Naive thymus-derived CD4-positive, alpha-beta T cell (primary cell): ENCODE measurements at regions of chr16 and their contacts with region 1.

Region 1: GRCh38 chr16:79601931-79602627 is 1.5 kb upstream of the MAF start:
- DNase-seq: peak; percentile 51 to 78 (median 72)
- ATAC-seq: peak; percentile 20
- H3K4me3 ChIP-seq: peak overlapping the region; percentile 84
- H3K4me3 Mint-ChIP-seq: peak overlapping the region; percentile 90 to 98 (median 94)
- H3K27ac ChIP-seq: no peak overlapping the region
- H3K27ac Mint-ChIP-seq: peak overlapping the region in 7 of 9 donors; percentile 3 to 98 (median 66)
- H3K4me1 ChIP-seq: peaks cover 4 to 7% of the 10 kb centered on the region in 2 donors
- H3K4me1 Mint-ChIP-seq: peaks cover 6 to 47% (median 33%) of the 10 kb centered on the region in 7 donors
- H3K27me3 ChIP-seq: no peaks in the 10 kb centered on the region
- H3K27me3 Mint-ChIP-seq: peaks cover 15 to 24% (median 20%) of the 10 kb centered on the region in 5 donors

Region 2: GRCh38 chr16:78478267-78478861 is 1123.7 kb before region 1 on chr16:
- CTCF ChIA-PET with region 1: interaction called, 3 read pairs
- POLR2A ChIA-PET with region 1: no interaction called
- intact Hi-C with region 1: loop called in 1 of 2 experiments (anchors 1 kb)
- DNase-seq: peak in 3 of 9 donors; percentile 5 to 8 (median 7)
- ATAC-seq: peak; percentile 54
- H3K4me3 ChIP-seq: no peak overlapping the region
- H3K4me3 Mint-ChIP-seq: no peak overlapping the region
- H3K27ac ChIP-seq: no peak overlapping the region
- H3K27ac Mint-ChIP-seq: no peak overlapping the region
- H3K4me1 ChIP-seq: no peaks in the 10 kb centered on the region
- H3K4me1 Mint-ChIP-seq: no peaks in the 10 kb centered on the region
- H3K27me3 ChIP-seq: no peaks in the 10 kb centered on the region
- H3K27me3 Mint-ChIP-seq: no peaks in the 10 kb centered on the region

Region 3: DNA sequence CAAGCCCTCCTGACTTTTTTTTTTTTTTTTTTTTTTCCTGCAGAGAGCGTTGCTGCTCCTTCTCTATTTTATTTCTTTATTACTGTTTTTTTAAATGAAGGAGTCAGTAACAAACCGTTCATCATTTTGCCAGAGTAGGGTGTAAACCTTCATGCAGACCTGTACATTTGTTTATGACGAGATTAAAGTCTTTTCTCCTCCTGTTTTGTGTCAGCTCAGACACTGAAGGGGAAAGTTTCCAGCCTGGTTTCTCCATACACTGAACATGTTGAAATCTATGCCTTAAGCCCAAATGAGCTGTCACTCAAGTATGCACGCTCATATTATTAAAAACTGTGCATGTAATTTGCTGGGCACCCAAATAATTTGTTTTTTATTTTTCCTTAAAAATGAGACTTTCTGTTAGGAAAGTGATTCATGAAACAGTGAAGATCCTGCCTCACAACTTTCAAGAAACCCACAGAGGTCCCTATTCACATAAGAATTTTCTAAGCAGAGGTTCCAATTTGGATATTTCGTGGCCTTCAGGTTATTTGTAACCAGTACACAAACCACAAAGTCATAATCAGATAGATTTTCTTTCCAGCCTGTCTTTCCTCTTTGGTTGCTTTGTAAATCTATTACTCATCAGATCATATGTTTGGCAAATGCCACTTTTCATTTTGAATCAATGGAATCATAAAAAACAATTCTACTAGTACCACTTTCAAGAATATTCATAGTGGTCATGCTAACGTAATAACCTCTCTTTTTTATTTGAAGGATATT is 701.9 kb before region 1 on chr16:
- CTCF ChIA-PET with region 1: no interaction called
- POLR2A ChIA-PET with region 1: no interaction called
- intact Hi-C with region 1: loop called in 1 of 2 experiments (anchors 10 kb)
- DNase-seq: no peak
- ATAC-seq: no peak
- H3K4me3 ChIP-seq: no peak overlapping the region
- H3K4me3 Mint-ChIP-seq: no peak overlapping the region
- H3K27ac ChIP-seq: no peak overlapping the region
- H3K27ac Mint-ChIP-seq: peak overlapping the region in 1 of 9 donors; percentile 13
- H3K4me1 ChIP-seq: peaks cover 0 to 10% of the 10 kb centered on the region in 2 donors
- H3K4me1 Mint-ChIP-seq: peaks cover 0 to 28% (median 5%) of the 10 kb centered on the region in 7 donors
- H3K27me3 ChIP-seq: no peaks in the 10 kb centered on the region
- H3K27me3 Mint-ChIP-seq: no peaks in the 10 kb centered on the region

Region 4: DNA sequence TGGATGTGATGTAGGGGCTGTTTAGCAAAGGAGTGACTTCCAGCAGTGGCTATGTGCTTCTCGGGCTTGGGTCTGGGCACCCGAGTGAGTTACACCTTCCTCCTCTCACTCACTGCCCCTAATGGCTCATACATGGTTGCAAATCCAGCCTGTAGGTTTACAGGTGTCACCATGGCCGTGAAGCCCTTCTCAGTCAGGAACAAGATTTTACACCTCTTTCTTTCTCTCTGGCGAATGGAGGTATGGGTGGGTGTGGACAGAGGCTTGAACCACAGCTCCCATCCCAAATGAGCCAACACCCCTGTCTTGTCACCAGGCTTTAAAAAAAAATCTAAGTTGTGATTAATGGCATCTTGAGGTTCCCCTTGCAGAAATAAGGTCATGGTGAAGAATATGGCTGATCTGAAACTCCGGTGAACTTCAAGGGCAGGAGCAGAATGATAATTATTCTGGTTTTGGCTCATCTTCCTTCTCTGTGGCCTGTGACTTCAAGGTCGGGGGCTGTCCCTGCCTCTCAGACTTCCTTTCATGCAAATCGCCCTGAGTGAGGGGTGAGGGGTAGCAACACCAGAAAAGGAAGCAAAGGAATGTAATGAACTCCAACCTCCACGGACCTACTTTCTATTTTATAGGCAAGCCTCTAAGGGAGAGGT is 332.7 kb before region 1 on chr16:
- CTCF ChIA-PET with region 1: interaction called, 3 read pairs
- POLR2A ChIA-PET with region 1: no interaction called
- intact Hi-C with region 1: loop called (anchors 1 to 5 kb)
- DNase-seq: peak in 1 of 9 donors; percentile 66
- ATAC-seq: peak; percentile 12
- H3K4me3 ChIP-seq: peak overlapping the region; percentile 10
- H3K4me3 Mint-ChIP-seq: peak overlapping the region in 9 of 10 donors; percentile 23 to 79 (median 58)
- H3K27ac ChIP-seq: no peak overlapping the region
- H3K27ac Mint-ChIP-seq: peak overlapping the region in 2 of 9 donors; percentile 22 to 84
- H3K4me1 ChIP-seq: peaks cover 38 to 46% of the 10 kb centered on the region in 2 donors
- H3K4me1 Mint-ChIP-seq: peaks cover 41 to 78% (median 60%) of the 10 kb centered on the region in 7 donors
- H3K27me3 ChIP-seq: no peaks in the 10 kb centered on the region
- H3K27me3 Mint-ChIP-seq: peaks cover 15 to 43% (median 37%) of the 10 kb centered on the region in 5 donors

Region 5: DNA sequence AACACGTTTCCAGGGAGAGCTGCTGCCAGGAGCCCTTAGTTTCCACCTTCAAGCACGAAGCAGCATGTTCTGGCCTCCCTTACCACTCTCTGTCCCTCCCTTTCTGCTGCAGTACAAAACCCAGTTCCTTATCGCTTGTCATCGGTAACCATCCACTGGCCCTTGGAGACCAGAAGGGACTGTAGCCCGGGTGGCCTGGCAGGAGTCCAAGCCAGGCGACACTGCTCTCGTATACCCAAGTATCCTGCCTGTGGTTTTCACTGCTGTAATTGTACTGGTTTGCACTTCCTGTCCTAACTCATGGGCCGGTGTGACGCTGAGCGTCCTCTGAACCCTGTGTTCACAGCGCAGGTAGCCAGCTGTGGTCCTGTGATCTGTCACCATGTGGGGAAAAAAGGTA is 82.6 kb before region 1 on chr16:
- CTCF ChIA-PET with region 1: no interaction called
- POLR2A ChIA-PET with region 1: no interaction called
- intact Hi-C with region 1: no loop called
- DNase-seq: no peak
- ATAC-seq: peak; percentile 72
- H3K4me3 ChIP-seq: no peak overlapping the region
- H3K4me3 Mint-ChIP-seq: no peak overlapping the region
- H3K27ac ChIP-seq: no peak overlapping the region
- H3K27ac Mint-ChIP-seq: peak overlapping the region in 1 of 9 donors; percentile 32
- H3K4me1 ChIP-seq: peaks cover 0 to 3% of the 10 kb centered on the region in 2 donors
- H3K4me1 Mint-ChIP-seq: peaks cover 0 to 9% (median 7%) of the 10 kb centered on the region in 7 donors
- H3K27me3 ChIP-seq: no peaks in the 10 kb centered on the region
- H3K27me3 Mint-ChIP-seq: peaks cover 17 to 43% (median 32%) of the 10 kb centered on the region in 5 donors

Region 6: GRCh38 chr16:79535130-79535529 is 66.9 kb before region 1 on chr16:
- CTCF ChIA-PET with region 1: no interaction called
- POLR2A ChIA-PET with region 1: no interaction called
- intact Hi-C with region 1: no loop called
- DNase-seq: no peak
- ATAC-seq: peak; percentile 46
- H3K4me3 ChIP-seq: no peak overlapping the region
- H3K4me3 Mint-ChIP-seq: no peak overlapping the region
- H3K27ac ChIP-seq: no peak overlapping the region
- H3K27ac Mint-ChIP-seq: no peak overlapping the region
- H3K4me1 ChIP-seq: no peaks in the 10 kb centered on the region
- H3K4me1 Mint-ChIP-seq: peaks cover 0 to 3% (median 0%) of the 10 kb centered on the region in 7 donors
- H3K27me3 ChIP-seq: no peaks in the 10 kb centered on the region
- H3K27me3 Mint-ChIP-seq: peaks cover 0 to 4% (median 0%) of the 10 kb centered on the region in 5 donors

Region 7: DNA sequence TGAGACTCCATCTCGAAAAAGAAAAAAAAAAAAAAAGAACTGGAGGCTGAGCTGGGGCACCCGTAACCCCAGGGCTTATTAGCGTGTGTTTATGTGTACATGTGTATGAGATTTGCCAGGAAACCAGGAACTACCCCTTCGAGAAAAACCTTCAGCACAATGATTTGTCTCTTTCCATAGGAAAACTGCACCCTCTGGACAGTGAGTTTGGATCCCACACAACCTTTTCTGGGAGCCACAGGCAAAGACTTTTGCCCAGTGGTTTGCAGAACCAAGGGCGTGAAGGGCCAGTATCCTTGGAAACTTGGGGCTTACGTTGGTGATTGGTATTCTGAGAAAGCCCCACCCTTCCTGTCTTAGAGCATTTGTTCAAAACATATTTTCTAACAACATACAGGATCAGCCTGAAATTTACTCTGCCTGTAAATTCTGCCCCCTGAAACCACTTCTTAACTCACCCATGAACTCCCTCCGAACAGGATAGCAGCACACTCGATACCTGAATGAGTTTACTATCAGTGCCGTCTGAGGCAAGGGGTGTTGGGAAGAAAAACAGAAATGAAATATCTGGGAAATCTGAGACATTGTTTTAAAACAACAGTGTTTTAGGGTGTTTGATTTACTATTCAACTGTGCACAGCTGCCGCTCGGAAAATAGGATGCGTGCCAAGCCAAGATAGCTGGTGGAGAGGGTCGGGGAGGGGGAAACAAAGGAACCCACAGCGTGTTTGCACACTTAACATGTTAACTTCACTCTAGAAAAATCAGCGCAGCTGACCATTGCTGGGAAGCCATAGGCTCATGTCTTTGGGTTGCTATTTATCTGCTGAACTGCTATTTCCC is 38.7 kb after region 1 on chr16:
- CTCF ChIA-PET with region 1: no interaction called
- POLR2A ChIA-PET with region 1: interaction called, 6 read pairs
- intact Hi-C with region 1: loop called in 1 of 2 experiments (anchors 1 kb)
- DNase-seq: peak in 4 of 9 donors; percentile 1 to 35 (median 28)
- ATAC-seq: peak; percentile 34
- H3K4me3 ChIP-seq: no peak overlapping the region
- H3K4me3 Mint-ChIP-seq: peak overlapping the region; percentile 8 to 77 (median 60)
- H3K27ac ChIP-seq: no peak overlapping the region
- H3K27ac Mint-ChIP-seq: peak overlapping the region; percentile 7 to 95 (median 57)
- H3K4me1 ChIP-seq: peaks cover 3 to 5% of the 10 kb centered on the region in 2 donors
- H3K4me1 Mint-ChIP-seq: peaks cover 9 to 45% (median 28%) of the 10 kb centered on the region in 7 donors
- H3K27me3 ChIP-seq: no peaks in the 10 kb centered on the region
- H3K27me3 Mint-ChIP-seq: peaks cover 0 to 7% (median 3%) of the 10 kb centered on the region in 5 donors

Region 8: DNA sequence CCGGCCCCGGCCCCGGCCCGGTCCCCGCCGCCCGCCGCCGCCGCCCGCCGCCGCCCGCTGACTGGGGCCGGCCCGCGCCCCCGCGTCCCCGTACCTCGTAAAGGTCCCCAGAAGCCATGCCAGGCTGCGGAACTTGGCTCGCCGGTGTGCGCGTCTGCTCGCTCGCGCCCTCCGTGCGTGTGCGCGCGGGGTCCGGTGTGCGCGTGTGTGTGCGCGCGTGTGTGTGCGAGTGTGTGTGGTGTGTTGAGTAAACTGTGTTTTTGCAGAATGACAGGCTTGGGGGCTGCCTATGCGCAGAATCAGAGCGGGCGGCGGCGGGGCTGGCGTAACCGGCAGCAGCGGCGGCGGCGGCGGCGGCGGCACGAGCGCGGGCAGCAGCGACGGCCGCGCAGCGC is 1202.0 kb after region 1 on chr16:
- CTCF ChIA-PET with region 1: no interaction called
- POLR2A ChIA-PET with region 1: no interaction called
- intact Hi-C with region 1: loop called (anchors 10 kb)
- DNase-seq: peak; percentile 26 to 69 (median 52)
- ATAC-seq: peak; percentile 69
- H3K4me3 ChIP-seq: no peak overlapping the region
- H3K4me3 Mint-ChIP-seq: peak overlapping the region; percentile 85 to 96 (median 94)
- H3K27ac ChIP-seq: no peak overlapping the region
- H3K27ac Mint-ChIP-seq: peak overlapping the region in 7 of 9 donors; percentile 46 to 98 (median 78)
- H3K4me1 ChIP-seq: peaks cover 0 to 10% of the 10 kb centered on the region in 2 donors
- H3K4me1 Mint-ChIP-seq: peaks cover 12 to 59% (median 18%) of the 10 kb centered on the region in 7 donors
- H3K27me3 ChIP-seq: no peaks in the 10 kb centered on the region
- H3K27me3 Mint-ChIP-seq: peaks cover 0 to 9% (median 0%) of the 10 kb centered on the region in 5 donors